GM12878 (cell line): ENCODE measurements at regions of chr3 and their contacts with region 1.

Region 1: GRCh38 chr3:79521238-79521848 is 246.5 kb downstream of the ROBO1 start:
- DNase-seq: peak; percentile 5
- ATAC-seq: peak; percentile 79
- H3K4me3 ChIP-seq: no peak overlapping the region
- H3K27ac ChIP-seq: no peak overlapping the region
- H3K4me1 ChIP-seq: no peaks in the 10 kb centered on the region
- H3K27me3 ChIP-seq: no peaks in the 10 kb centered on the region
- CTCF ChIP-seq: peak; percentile 34 to 68 (median 52); a peak in 5 of 6 replicates
- EP300 ChIP-seq: no peak
- POLR2A ChIP-seq: no peak
- RAD21 ChIP-seq: peak; percentile 71

Region 2: GRCh38 chr3:79551995-79552394 is 30.7 kb after region 1 on chr3:
- CTCF ChIA-PET with region 1: interaction called, 3 read pairs
- POLR2A ChIA-PET with region 1: no interaction called
- RAD21 ChIA-PET with region 1: no interaction called
- SMC1A ChIA-PET with region 1: interaction called, 10 read pairs
- in situ Hi-C with region 1: no loop called
- intact Hi-C with region 1: no loop called
- DNase-seq: no peak
- ATAC-seq: no peak
- H3K4me3 ChIP-seq: no peak overlapping the region
- H3K27ac ChIP-seq: no peak overlapping the region
- H3K4me1 ChIP-seq: no peaks in the 10 kb centered on the region
- H3K27me3 ChIP-seq: no peaks in the 10 kb centered on the region
- CTCF ChIP-seq: no peak
- EP300 ChIP-seq: no peak
- POLR2A ChIP-seq: no peak
- RAD21 ChIP-seq: no peak

Region 3: GRCh38 chr3:79724203-79724602 is 202.9 kb after region 1 on chr3:
- CTCF ChIA-PET with region 1: interaction called, 3 read pairs
- POLR2A ChIA-PET with region 1: no interaction called
- RAD21 ChIA-PET with region 1: no interaction called
- SMC1A ChIA-PET with region 1: no interaction called
- in situ Hi-C with region 1: no loop called
- intact Hi-C with region 1: loop called (anchors 5 kb)
- DNase-seq: no peak
- ATAC-seq: no peak
- H3K4me3 ChIP-seq: no peak overlapping the region
- H3K27ac ChIP-seq: no peak overlapping the region
- H3K4me1 ChIP-seq: no peaks in the 10 kb centered on the region
- H3K27me3 ChIP-seq: no peaks in the 10 kb centered on the region
- CTCF ChIP-seq: no peak
- EP300 ChIP-seq: no peak
- POLR2A ChIP-seq: no peak
- RAD21 ChIP-seq: no peak

Region 4: DNA sequence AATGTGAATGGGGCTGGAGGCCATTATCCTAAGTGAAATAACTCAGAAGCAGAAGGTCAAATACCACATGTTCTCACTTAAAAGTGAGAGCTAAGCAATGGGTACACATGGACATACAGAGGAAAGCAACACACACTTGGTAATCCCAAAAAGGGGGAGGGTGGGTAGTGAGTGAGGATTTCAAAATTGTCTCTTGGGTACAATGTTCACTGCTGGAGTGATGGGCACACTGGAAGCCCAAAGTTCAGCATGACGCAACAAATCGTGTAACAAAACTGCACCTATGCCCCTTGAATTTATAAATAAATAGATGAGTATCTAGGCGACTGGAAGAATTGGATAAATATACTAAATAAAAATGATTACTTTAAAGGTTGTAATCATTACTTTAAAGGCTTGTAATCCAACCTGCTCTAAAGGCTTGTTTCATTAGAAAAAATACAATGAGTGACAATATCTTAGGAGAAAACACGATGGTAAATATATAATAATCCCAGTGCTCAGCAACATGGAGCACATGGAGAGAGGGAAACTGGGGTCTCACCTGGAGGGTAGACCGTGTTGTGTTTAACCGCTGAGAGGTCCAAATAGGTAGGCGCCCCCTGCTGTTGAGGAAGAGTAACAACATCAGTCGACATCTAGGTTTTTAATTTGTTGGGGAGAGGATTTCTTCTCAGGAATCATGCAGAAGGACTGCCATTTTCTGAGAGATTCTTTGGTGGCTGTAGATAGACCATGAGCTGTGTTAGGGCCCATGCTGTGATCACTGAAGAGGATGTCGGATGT is 325.0 kb after region 1 on chr3:
- CTCF ChIA-PET with region 1: interaction called, 12 read pairs
- POLR2A ChIA-PET with region 1: no interaction called
- RAD21 ChIA-PET with region 1: interaction called, 4 read pairs
- SMC1A ChIA-PET with region 1: interaction called, 3 read pairs
- in situ Hi-C with region 1: loop called (anchors 10 kb)
- intact Hi-C with region 1: loop called (anchors 1 kb)
- DNase-seq: no peak
- ATAC-seq: peak; percentile 56
- H3K4me3 ChIP-seq: no peak overlapping the region
- H3K27ac ChIP-seq: no peak overlapping the region
- H3K4me1 ChIP-seq: no peaks in the 10 kb centered on the region
- H3K27me3 ChIP-seq: no peaks in the 10 kb centered on the region
- CTCF ChIP-seq: peak; percentile 45 to 69 (median 46); a peak in 5 of 6 replicates
- EP300 ChIP-seq: no peak
- POLR2A ChIP-seq: no peak
- RAD21 ChIP-seq: no peak

Region 5: DNA sequence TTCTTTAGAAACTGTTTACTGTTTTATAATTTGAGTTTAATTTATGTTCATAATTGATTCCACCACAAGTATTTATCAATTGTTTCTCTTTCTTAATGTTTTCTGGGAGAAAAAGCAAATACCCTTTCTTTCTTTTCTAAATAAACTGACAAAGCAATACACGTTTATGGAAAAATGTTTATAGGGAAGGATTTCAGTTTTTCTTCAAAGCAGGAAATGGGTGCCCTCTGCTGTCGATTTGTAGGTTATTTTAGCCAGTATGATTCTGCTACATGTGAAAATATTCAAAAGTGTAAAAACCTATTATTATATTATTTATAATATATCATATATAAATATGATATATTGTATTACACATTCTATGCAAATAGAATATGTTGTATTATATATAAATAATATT is 1167.5 kb after region 1 on chr3:
- CTCF ChIA-PET with region 1: interaction called, 4 read pairs
- POLR2A ChIA-PET with region 1: no interaction called
- RAD21 ChIA-PET with region 1: no interaction called
- SMC1A ChIA-PET with region 1: no interaction called
- in situ Hi-C with region 1: no loop called
- intact Hi-C with region 1: loop called (anchors 10 kb)
- DNase-seq: no peak
- ATAC-seq: no peak
- H3K4me3 ChIP-seq: no peak overlapping the region
- H3K27ac ChIP-seq: no peak overlapping the region
- H3K4me1 ChIP-seq: no peaks in the 10 kb centered on the region
- H3K27me3 ChIP-seq: no peaks in the 10 kb centered on the region
- CTCF ChIP-seq: peak in 1 of 3 experiments; percentile 2; a peak in 1 of 6 replicates
- EP300 ChIP-seq: no peak
- POLR2A ChIP-seq: no peak
- RAD21 ChIP-seq: no peak